ENCODE measurements at regions of chr7 and their contacts with region 1.

Region 1: DNA sequence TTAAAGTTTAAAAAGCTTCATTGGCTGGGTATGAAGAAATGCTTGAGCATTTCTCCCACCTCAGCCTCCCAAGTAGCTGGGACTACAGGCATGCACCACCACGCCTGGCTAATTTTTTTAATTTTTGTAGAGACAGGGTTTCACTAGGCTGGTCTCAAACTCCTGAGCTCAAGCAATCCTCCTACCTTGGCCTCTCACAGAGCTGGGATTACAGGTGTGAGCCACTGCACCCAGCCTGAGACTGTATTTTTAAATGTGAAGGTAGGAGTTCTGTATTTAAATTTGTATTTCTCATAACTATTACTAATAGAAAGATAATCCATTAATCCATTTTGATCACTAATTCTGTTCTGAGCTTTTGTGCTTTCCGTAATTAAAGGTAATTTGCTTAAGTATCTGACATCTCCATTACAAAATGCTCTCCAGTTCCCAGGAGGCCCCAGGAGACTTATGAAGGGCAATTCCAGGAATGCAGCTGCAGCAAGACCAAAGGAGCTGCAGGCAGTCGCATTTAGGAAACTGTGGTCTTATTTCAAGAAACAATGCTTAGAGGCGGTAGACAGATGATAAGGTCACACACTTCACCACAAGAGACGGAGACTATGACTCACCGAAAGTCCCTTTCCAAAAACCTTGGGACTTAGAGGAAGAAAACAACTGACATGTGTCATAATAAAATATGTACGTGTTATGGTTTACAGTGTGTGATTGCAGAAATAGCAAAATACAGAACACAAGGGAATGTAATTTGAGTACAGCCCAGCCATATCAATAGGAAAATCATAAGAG is 23.3 kb downstream of the YAE1 start:
- DNase-seq: peak; percentile 84
- ATAC-seq: peak; percentile 76
- H3K4me3 ChIP-seq: no peak overlapping the region
- H3K27ac ChIP-seq: no peak overlapping the region
- H3K4me1 ChIP-seq: peaks cover 9% of the 10 kb centered on the region
- H3K27me3 ChIP-seq: no peaks in the 10 kb centered on the region
- CTCF ChIP-seq: no peak
- POLR2A ChIP-seq: no peak
- RAD21 ChIP-seq: no peak

Region 2: GRCh38 chr7:39650676-39651075 is 61.2 kb after region 1 on chr7:
- CTCF ChIA-PET with region 1: no interaction called
- POLR2A ChIA-PET with region 1: no interaction called
- dilution Hi-C with region 1: no loop called
- in situ Hi-C with region 1: no loop called
- intact Hi-C with region 1: loop called (anchors 5 kb)
- DNase-seq: peak; percentile 81
- ATAC-seq: peak; percentile 70
- H3K4me3 ChIP-seq: no peak overlapping the region
- H3K27ac ChIP-seq: peak overlapping the region; percentile 78
- H3K4me1 ChIP-seq: peaks cover 7% of the 10 kb centered on the region
- H3K27me3 ChIP-seq: no peaks in the 10 kb centered on the region
- CTCF ChIP-seq: no peak
- POLR2A ChIP-seq: no peak
- RAD21 ChIP-seq: no peak